Right ventricle myocardium superior (tissue), 1 donor: ENCODE measurements at regions of chr9 and their contacts with region 1.

Region 1: GRCh38 chr9:137227063-137227852 is at the start of gene RNF224:
- DNase-seq: peak; percentile 85
- ATAC-seq: peak; percentile 34
- total RNA-seq, gene RNF224: not detected

Region 2: DNA sequence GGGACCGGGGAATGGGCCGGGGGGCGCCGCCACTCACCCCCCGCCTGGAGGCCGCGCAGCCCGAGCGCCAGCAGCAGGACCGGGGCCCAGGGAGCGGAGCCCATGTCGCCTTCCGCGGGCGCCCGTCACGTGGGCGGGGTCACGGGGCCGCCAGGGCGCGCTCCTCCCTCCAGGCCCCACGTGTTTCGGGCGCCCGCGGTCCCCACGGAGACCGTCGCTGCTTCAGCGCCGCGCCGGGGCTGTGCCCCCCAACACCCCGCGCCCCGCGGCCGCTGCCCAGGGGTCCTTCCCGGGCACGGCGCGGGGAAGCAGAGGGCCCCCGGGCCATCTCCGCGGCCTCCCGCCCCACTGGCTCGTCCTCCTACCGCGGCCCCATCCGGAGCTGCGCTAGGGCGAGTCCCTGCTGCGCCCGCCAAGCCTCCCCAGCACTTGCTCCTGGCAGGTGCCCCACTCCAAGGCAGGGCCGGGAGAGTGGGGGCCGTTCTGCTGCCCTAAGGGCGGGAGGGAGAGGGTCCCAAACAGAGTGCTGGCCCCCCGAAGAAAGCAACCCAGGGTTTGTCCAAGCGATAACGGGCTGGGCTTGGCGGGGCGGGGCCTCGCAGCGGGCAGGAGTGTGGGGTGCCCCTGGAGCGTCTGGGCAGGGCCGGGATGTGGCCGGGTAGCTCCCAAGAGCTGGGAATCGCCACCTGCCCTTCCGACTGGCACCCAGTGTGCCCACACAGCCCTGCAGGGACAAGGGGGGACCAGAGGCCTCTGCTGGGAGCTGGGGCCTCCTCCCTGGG is 112.5 kb before region 1 on chr9 and contains the start of gene DPP7:
- intact Hi-C with region 1: loop called (anchors 2 kb)
- DNase-seq: peak; percentile 89
- ATAC-seq: peak; percentile 88
- total RNA-seq, gene DPP7: 153 TPM

Region 3: GRCh38 chr9:137194388-137194787 is 32.9 kb before region 1 on chr9:
- intact Hi-C with region 1: loop called (anchors 5 kb)
- DNase-seq: peak; percentile 88
- ATAC-seq: peak; percentile 79